BJ (cell line): ENCODE measurements at regions of chr10 and their contacts with region 1.

Region 1: DNA sequence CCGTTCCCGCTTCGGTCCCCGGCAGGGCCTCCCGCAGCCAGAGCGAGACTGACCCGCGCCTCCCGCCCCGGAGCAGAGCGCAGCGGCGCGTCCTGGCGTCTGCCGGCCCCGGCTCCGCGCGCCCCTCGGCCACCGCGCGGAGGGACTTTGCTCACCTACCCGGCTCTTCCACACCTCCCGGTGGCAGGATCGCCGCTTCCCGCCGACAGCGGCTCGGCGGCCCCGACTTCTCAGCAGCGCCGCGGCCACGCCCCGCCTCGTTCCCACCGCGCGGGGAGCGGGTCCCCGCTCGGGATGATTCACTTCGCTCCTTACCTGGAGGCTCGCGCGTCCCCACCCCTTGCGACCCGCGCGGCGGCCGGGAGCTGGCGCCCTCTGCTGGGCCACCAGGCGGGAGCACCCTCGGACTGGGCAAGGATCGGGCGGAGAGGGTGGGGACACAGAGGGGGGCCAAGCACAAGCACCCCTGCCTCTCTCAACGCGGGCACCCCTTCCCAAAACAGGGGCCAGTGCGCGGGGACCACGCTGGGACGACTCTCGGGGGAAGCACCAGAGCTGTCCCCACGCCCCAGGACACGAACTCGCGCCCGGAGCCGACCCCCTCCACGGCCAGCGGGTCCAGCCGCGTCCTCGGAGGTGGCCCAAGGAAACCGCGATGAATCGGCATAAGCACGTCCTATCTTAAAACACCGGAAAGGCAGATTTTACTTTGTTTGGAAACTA is 101.0 kb upstream of the SVIL start:
- DNase-seq: no peak
- H3K4me3 ChIP-seq: peak overlapping the region; percentile 71
- H3K27me3 ChIP-seq: peaks cover 9% of the 10 kb centered on the region
- CTCF ChIP-seq: peak; percentile 87

Region 2: DNA sequence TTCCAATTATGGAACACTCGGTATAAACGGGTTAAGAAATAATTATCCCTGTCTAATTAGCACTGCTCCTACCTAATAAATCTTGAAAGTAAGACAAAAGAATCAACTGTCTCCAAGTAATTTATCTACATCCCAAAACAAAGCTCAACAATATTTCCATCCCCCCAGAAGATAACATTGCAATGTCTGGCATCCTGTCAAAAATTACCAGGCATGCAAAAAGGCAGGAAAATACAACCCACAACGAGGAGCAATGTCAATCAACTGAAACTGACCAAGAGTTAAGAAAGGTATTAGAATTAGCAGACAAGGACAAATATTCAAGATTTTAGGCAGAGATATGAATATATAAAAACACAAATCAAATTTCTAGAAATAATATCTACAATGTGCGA is 16.5 kb before region 1 on chr10:
- CTCF ChIA-PET with region 1: interaction called, 14 read pairs
- POLR2A ChIA-PET with region 1: no interaction called
- DNase-seq: no peak
- H3K4me3 ChIP-seq: no peak overlapping the region
- H3K27me3 ChIP-seq: no peaks in the 10 kb centered on the region
- CTCF ChIP-seq: no peak

Region 3: GRCh38 chr10:29746080-29746797 is 10.5 kb after region 1 on chr10:
- CTCF ChIA-PET with region 1: interaction called, 14 read pairs
- POLR2A ChIA-PET with region 1: no interaction called
- DNase-seq: peak; percentile 29
- H3K4me3 ChIP-seq: no peak overlapping the region
- H3K27me3 ChIP-seq: peaks cover 3% of the 10 kb centered on the region; the same call in 1 of the 2 replicates
- CTCF ChIP-seq: no peak